ENCODE measurements at regions of chr5 and their contacts with region 1.

Region 1: DNA sequence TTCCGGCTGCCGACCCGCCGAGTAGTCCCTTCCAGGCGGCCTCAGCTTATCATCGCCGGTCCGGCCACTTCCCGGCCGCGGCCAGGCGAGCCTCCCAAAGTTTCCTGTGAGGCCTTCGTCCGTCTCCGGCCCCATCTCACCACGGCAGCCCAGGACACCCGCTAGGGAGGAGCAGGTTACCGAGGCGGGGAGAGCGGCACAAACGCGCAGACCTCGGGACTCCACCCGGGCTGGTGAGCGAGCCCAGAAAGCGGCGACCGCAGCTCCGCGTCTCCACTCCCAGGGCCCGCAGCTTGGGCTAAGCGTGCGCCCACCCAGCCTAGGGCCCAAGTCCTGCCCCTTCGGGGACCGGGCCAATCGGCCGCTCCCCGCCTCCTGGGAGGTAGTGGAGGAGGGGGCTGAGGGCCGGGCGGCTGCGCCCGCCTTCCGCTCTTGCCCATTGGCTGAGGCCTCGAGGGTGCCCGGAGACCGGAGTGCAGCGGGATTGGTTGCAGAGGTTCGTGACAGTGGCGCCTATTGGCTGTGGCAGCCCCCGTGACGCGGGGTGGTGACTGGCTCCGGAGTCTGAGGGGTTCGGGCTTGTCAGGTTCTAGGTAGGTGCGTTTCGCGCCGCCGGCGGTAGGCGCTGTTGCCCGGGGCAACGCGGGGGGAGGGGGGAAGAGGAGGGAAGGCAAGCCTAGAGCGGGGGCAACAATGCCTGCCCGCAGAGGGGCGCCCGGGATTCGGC is 867 bp downstream of the FER start:
- DNase-seq: peak; percentile 98
- H3K4me3 Mint-ChIP-seq: peak overlapping the region; percentile 94
- H3K27ac Mint-ChIP-seq: peak overlapping the region; percentile 88
- H3K4me1 Mint-ChIP-seq: peaks cover 9% of the 10 kb centered on the region
- H3K27me3 Mint-ChIP-seq: peaks cover 3% of the 10 kb centered on the region

Region 2: GRCh38 chr5:107893642-107894041 is 854.9 kb before region 1 on chr5:
- CTCF ChIA-PET with region 1: no interaction called
- POLR2A ChIA-PET with region 1: no interaction called
- intact Hi-C with region 1: no loop called
- DNase-seq: no peak
- H3K4me3 Mint-ChIP-seq: no peak overlapping the region
- H3K27ac Mint-ChIP-seq: no peak overlapping the region
- H3K4me1 Mint-ChIP-seq: no peaks in the 10 kb centered on the region
- H3K27me3 Mint-ChIP-seq: no peaks in the 10 kb centered on the region

Region 3: DNA sequence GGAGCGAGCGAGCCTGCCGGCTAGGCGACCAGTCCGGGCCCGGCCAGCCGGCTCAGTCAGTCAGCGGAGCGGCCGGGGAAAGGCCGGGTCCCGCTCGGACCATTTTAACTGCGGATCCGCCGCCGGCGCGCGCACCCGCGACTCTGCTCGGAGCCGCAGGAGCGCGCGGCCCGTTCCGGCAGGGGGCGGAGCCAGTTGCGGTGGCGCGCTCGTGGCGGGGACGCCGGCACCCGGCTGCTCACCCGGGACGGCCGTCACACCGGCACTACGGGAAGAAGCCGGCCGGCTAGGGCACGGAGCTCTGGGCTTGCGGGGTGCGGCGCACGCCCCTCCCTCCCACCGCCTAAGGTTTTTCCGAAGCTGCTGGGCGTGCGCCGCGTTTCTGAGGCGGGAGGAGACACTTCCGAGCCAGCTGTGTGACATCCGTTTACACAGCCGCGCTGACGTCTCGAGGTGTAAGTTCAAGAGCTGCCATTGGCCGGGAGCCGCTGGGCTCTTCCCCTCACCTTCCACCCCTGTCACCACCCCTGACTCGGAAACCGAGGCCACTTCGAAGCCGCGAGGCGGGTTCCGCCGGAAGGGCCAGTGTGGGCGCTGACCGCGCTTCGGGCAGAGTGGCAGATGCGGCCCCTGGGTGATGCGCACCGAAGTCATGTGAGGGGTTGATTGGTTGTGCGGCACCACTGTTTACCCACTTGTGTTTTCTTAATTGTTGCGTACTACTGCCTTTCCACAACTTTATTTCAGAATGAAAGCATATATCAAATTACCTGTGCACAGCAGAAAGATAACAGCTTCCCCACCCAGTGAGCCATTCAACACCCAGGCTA is 366.4 kb before region 1 on chr5 and contains the start of gene FBXL17:
- CTCF ChIA-PET with region 1: no interaction called
- POLR2A ChIA-PET with region 1: interaction called, 8 read pairs
- intact Hi-C with region 1: loop called (anchors 2 kb)
- DNase-seq: peak; percentile 96
- H3K4me3 Mint-ChIP-seq: peak within 1 kb of the TSS; percentile 79
- H3K27ac Mint-ChIP-seq: peak within 1 kb of the TSS; percentile 92
- H3K4me1 Mint-ChIP-seq: peaks cover 34% of the 10 kb centered on the region
- H3K27me3 Mint-ChIP-seq: peaks cover 1% of the 10 kb centered on the region
- total RNA-seq, gene FBXL17: 5.5 to 6.7 TPM

Region 4: GRCh38 chr5:108642167-108642906 is 106.2 kb before region 1 on chr5:
- CTCF ChIA-PET with region 1: no interaction called
- POLR2A ChIA-PET with region 1: no interaction called
- intact Hi-C with region 1: loop called (anchors 2 kb)
- DNase-seq: peak; percentile 67
- H3K4me3 Mint-ChIP-seq: no peak overlapping the region
- H3K27ac Mint-ChIP-seq: no peak overlapping the region
- H3K4me1 Mint-ChIP-seq: peaks cover 2% of the 10 kb centered on the region
- H3K27me3 Mint-ChIP-seq: peaks cover 3% of the 10 kb centered on the region

Region 5: GRCh38 chr5:108727651-108728565 is 20.7 kb before region 1 on chr5:
- CTCF ChIA-PET with region 1: interaction called, 4 read pairs
- POLR2A ChIA-PET with region 1: interaction called, 11 read pairs
- intact Hi-C with region 1: loop called (anchors 1 kb)
- DNase-seq: peak; percentile 56
- H3K4me3 Mint-ChIP-seq: peak overlapping the region; percentile 64
- H3K27ac Mint-ChIP-seq: no peak overlapping the region
- H3K4me1 Mint-ChIP-seq: peaks cover 23% of the 10 kb centered on the region
- H3K27me3 Mint-ChIP-seq: peaks cover 29% of the 10 kb centered on the region

Region 6: GRCh38 chr5:108793207-108793606 is 44.6 kb after region 1 on chr5:
- CTCF ChIA-PET with region 1: no interaction called
- POLR2A ChIA-PET with region 1: no interaction called
- intact Hi-C with region 1: loop called (anchors 5 kb)
- DNase-seq: no peak
- H3K4me3 Mint-ChIP-seq: no peak overlapping the region
- H3K27ac Mint-ChIP-seq: no peak overlapping the region
- H3K4me1 Mint-ChIP-seq: no peaks in the 10 kb centered on the region
- H3K27me3 Mint-ChIP-seq: no peaks in the 10 kb centered on the region

Region 7: GRCh38 chr5:108898707-108899106 is 150.1 kb after region 1 on chr5:
- CTCF ChIA-PET with region 1: no interaction called
- POLR2A ChIA-PET with region 1: no interaction called
- intact Hi-C with region 1: no loop called
- DNase-seq: no peak
- H3K4me3 Mint-ChIP-seq: no peak overlapping the region
- H3K27ac Mint-ChIP-seq: no peak overlapping the region
- H3K4me1 Mint-ChIP-seq: no peaks in the 10 kb centered on the region
- H3K27me3 Mint-ChIP-seq: no peaks in the 10 kb centered on the region

Region 8: DNA sequence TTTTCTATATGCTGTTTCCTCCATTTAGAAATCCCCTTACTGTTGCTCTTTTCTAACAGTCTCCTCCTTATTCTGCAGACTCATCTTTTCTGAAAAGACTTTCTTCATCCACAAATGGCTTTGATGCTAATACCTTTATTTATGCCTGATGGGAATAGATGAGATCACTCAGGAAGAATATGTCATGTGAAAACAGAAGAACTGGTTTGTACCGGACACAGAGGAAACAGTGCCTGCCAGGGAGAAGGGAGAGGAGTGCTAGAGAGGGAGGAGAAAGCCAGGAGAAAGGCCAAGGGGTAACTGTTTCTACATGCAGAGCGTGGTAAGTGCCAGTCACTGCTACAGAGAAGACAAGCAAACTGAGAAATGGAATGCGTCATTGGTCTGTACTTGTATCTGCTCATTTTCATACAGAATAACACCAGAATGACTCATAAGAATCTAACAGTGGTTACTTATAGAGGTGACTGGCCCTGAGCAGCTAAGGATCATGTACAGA is 707.1 kb after region 1 on chr5:
- CTCF ChIA-PET with region 1: no interaction called
- POLR2A ChIA-PET with region 1: no interaction called
- intact Hi-C with region 1: loop called (anchors 5 kb)
- DNase-seq: peak; percentile 51
- H3K4me3 Mint-ChIP-seq: no peak overlapping the region
- H3K27ac Mint-ChIP-seq: peak overlapping the region; percentile 74
- H3K4me1 Mint-ChIP-seq: peaks cover 8% of the 10 kb centered on the region
- H3K27me3 Mint-ChIP-seq: peaks cover 7% of the 10 kb centered on the region